ENCODE measurements at regions of chr5 and their contacts with region 1.

Region 1: DNA sequence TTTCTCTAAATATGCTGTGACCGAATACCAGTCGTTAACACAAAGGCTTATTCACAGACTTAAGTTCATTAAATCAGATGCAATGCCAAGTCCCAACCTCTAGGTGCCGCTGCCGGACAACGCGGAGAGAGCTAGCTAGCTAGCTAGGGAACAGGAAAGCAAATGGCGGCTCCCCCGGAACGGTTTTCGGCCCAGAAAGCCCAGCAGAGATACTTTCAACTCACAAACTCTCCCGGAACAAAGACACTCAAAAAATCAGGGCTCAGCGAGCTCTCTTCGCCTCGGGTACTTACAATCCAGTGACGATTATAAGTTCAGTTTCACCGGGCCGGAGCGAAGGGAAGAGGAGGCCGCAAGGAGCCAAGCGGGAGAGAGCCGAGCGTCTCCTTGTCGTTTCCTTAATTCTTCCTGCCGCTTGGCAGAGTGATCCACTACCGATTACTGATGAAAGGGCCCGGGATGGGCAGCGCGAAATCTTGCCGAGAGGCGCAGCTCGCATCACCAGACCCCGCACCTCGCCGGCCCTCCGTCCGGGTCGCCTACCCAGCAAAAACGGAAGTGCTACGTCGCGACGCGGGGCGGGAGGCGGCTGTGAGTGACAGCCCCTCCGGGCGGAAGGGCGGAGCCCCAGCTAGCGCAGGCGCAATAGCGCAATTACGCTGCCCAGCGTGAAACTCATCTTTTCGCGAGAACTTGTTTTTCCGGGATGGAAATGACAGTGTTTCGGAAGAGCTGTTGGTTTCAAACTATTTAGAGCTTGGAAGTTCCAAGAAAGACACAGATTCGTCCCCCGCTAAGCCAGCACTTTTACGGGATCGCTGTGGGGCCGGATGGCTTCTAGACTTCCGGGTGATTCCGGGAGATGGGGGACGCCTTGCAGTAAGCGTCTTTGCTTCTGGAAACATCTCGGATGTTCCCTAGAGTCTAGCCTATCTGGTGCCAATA is at the start of gene TAF7:
- DNase-seq: peak; percentile 98
- H3K4me3 Mint-ChIP-seq: peak within 1 kb of the TSS; percentile 92
- H3K27ac Mint-ChIP-seq: peak within 1 kb of the TSS; percentile 99
- H3K4me1 Mint-ChIP-seq: peaks cover 12% of the 10 kb centered on the region
- H3K27me3 Mint-ChIP-seq: peaks cover 2% of the 10 kb centered on the region
- total RNA-seq, gene TAF7: 71.5 and 75.0 TPM in 2 replicates

Region 2: GRCh38 chr5:141564216-141564692 is 243.8 kb after region 1 on chr5:
- intact Hi-C with region 1: loop called (anchors 2 kb)
- DNase-seq: peak; percentile 92
- H3K4me3 Mint-ChIP-seq: no peak overlapping the region
- H3K27ac Mint-ChIP-seq: peak overlapping the region; percentile 86
- H3K4me1 Mint-ChIP-seq: peaks cover 32% of the 10 kb centered on the region
- H3K27me3 Mint-ChIP-seq: no peaks in the 10 kb centered on the region

Region 3: GRCh38 chr5:141636413-141637122 is 316.1 kb after region 1 on chr5 and contains the starts of genes HDAC3 and RELL2:
- intact Hi-C with region 1: loop called (anchors 10 kb)
- DNase-seq: peak; percentile 99
- H3K4me3 Mint-ChIP-seq: peak within 1 kb of the TSS; percentile 96
- H3K27ac Mint-ChIP-seq: peak within 1 kb of the TSS; percentile 92
- H3K4me1 Mint-ChIP-seq: peaks cover 43% of the 10 kb centered on the region
- H3K27me3 Mint-ChIP-seq: no peaks in the 10 kb centered on the region
- total RNA-seq, gene HDAC3: 88.1 and 92.3 TPM in 2 replicates
- total RNA-seq, gene RELL2: 24.1 TPM in 2 replicates

Region 4: DNA sequence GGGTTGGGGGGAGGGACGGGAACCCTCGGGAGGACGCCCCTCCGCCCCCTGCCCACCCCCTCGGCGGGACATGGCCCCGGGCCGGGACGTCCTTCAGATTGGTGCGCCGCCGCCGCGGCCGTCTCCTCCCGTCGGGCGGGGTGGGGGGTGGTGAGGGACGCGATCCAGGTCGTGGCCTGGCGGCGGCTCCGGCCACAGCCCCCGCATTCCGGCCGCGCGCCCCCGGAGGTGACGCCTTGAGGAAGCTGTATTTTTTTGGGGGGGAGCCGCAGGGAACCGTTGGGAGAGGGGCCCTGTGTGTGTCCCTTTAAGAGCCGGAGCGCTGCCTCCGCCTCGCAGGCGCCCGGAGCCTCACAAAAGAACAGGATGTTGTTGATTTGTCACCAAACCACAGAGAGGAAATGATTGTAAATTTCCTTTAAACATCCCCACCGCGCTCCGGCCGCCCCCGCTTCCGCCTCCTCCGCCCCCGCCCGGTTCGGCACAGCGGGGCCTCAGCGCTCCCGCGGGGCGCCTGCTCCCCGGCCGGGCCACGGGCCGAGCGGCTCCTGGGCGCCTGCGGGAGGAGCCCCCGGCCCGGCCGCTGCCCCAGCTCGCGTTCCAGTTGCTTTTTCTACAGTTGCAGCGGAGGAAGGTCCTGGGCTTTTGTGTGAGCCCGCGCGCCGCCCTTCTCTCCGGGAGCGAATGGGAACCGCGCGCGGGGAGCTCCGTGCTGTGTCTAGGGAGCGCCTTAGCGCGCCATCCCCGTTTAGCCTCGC is 1036.4 kb after region 1 on chr5:
- intact Hi-C with region 1: loop called (anchors 10 kb)
- DNase-seq: peak; percentile 97
- H3K4me3 Mint-ChIP-seq: peak overlapping the region; percentile 79
- H3K27ac Mint-ChIP-seq: peak overlapping the region; percentile 94
- H3K4me1 Mint-ChIP-seq: peaks cover 40% of the 10 kb centered on the region
- H3K27me3 Mint-ChIP-seq: peaks cover 3% of the 10 kb centered on the region